Heart right ventricle (tissue), 16 donors: ENCODE measurements at regions of chr1 and their contacts with region 1.

Region 1: DNA sequence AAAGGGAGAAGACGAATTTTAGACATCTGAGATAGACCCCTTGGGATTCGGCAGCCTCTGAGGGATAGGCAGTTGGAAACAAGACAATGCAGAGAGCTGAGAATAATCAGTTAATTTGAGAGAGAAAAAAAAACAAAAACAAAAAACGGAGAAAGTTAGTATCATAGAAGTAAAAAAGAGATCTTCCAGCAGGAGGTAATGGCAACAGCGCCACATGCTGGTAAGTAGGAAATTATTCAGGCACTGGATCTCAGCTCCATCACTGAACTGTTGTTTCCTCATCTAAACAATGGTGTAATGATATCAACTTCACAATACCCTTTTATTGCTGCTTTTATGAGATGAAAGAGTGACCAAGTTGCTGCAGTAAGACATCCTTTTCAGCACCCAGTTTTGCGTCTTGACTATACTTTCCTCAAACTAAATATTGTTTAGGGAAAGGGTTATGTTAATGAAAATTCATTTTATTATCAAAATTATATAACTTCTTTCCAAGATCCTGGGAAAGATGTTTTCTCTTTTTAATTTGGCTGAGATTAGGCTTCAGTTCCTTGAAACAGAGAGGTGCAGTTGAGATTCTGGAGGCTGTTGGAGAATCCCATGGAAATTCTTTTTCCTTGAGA is 91.4 kb upstream of the KCNA3 start:
- DNase-seq: peak in 1 of 2 donors; percentile 42
- ATAC-seq: peak in 4 of 8 donors; percentile 58 to 69 (median 60)
- H3K4me3 ChIP-seq: no peak overlapping the region
- H3K27ac ChIP-seq: no peak overlapping the region
- H3K4me1 ChIP-seq: peaks cover 0 to 7% (median 0%) of the 10 kb centered on the region in 9 donors
- H3K27me3 ChIP-seq: peaks cover 0 to 38% (median 22%) of the 10 kb centered on the region in 7 donors
- CTCF ChIP-seq: peak; percentile 60 to 89 (median 85)

Region 2: GRCh38 chr1:110538075-110538474 is 228.1 kb before region 1 on chr1:
- intact Hi-C with region 1: loop called in 1 of 10 experiments (anchors 10 kb)
- DNase-seq: no peak
- ATAC-seq: no peak
- H3K4me3 ChIP-seq: no peak overlapping the region
- H3K27ac ChIP-seq: no peak overlapping the region
- H3K4me1 ChIP-seq: no peaks in the 10 kb centered on the region
- H3K27me3 ChIP-seq: peaks cover 0 to 30% (median 21%) of the 10 kb centered on the region in 7 donors
- CTCF ChIP-seq: no peak

Region 3: DNA sequence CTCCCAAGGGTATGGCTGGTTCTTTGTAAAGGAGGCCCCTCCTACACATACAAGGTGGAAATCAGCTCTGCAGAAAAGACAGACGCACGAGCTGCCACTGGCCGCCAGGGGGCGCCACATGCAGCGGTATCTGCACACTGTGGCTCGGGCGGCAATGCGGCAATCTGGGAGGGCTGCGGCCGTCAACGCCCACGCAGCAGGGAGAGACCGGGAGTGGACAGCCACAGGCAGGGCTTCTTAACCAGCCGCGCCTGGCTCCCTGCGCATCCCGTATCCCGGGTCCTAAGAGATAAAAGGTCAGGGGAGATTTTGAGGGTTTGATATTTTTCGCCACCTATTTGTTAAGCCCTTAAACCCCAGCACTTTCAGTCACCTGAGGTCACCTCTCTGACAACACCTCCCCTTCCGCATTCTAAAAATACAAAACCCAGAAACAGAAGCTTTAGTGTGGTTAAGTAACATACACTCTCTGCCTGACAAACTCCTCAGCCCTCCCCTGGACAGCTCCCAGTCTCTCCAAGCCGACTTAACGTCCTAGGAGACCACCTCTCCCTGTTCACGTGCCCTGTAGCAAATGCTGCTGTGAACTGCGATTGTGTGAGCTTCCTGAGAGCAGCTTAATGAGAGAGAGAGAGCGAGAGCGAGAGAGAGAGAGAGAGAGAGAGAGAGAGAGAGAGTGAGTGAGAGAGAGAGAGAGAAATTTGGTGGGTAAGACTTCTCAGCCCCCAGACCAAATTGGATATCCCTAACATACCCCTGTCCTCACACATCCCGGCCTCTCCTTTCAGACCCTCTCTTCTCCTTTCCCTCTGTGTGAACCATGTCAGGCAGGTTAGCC is 146.5 kb before region 1 on chr1:
- intact Hi-C with region 1: loop called in 3 of 10 experiments (anchors 5 kb)
- DNase-seq: peak; percentile 83
- ATAC-seq: peak; percentile 76 to 95 (median 91)
- H3K4me3 ChIP-seq: peak overlapping the region in 3 of 10 donors; percentile 1 to 46 (median 15)
- H3K27ac ChIP-seq: peak overlapping the region in 1 of 10 donors; percentile 52
- H3K4me1 ChIP-seq: peaks cover 0 to 11% (median 9%) of the 10 kb centered on the region in 9 donors
- H3K27me3 ChIP-seq: peaks cover 3 to 51% (median 41%) of the 10 kb centered on the region in 7 donors
- CTCF ChIP-seq: peak; percentile 90 to 97 (median 95)